ENCODE measurements at regions of chr10 and their contacts with region 1.

Region 1: DNA sequence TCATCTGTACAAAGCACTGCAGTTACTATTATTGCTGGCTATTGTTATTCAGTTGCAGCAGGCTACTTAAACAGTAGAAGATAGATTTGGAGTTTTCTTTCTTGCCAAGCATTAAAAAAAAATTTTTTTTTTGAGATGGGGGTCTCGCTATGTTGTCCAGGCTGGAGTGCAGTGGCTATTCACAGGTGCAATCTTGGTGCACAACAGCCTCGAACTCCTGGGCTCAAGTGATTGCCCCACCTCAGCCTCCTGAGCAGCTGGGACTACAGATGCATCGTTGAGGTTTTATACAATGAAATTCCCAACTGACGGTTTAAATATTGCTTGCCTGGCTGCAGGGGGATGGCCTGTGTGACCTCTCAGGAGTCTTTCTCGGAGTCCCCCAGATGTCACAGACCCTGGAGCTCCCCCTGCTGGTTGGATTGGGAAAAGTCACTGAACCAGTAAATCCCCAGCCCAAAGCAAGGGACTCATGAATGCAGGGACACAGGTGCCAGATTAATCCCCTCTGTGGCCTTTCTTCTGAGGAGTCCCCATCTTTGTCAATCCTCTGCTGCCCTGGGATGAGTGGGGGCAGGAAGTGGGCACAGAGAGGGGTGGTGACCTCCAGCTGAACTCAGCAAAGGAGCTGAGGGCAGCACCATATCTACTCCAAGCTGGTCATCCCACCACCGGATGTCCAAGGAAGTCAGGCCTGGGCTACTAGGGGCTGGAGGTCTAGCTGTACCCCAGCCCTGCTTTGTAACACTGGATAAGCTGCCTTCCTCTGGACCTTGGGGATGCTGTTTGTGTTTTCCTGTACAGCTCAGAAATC is 149.6 kb downstream of the C10orf105 start:
- DNase-seq: peak; percentile 80 to 87
- ATAC-seq: peak; percentile 76
- H3K4me3 ChIP-seq: no peak overlapping the region
- H3K27ac ChIP-seq: no peak overlapping the region
- H3K4me1 ChIP-seq: no peaks in the 10 kb centered on the region
- H3K27me3 ChIP-seq: no peaks in the 10 kb centered on the region

Region 2: GRCh38 chr10:71314028-71314693 is 255.8 kb before region 1 on chr10:
- intact Hi-C with region 1: loop called (anchors 2 to 5 kb)
- DNase-seq: peak; percentile 70 to 87
- ATAC-seq: peak; percentile 75
- H3K4me3 ChIP-seq: no peak overlapping the region
- H3K27ac ChIP-seq: no peak overlapping the region
- H3K4me1 ChIP-seq: no peaks in the 10 kb centered on the region
- H3K27me3 ChIP-seq: no peaks in the 10 kb centered on the region

Region 3: GRCh38 chr10:71383972-71384687 is 185.9 kb before region 1 on chr10:
- intact Hi-C with region 1: loop called (anchors 2 kb)
- DNase-seq: peak; percentile 77 to 91
- ATAC-seq: peak; percentile 86
- H3K4me3 ChIP-seq: no peak overlapping the region
- H3K27ac ChIP-seq: no peak overlapping the region
- H3K4me1 ChIP-seq: no peaks in the 10 kb centered on the region
- H3K27me3 ChIP-seq: no peaks in the 10 kb centered on the region